ENCODE measurements at regions of chrX and their contacts with region 1.

Region 1: GRCh38 chrX:109890895-109891502 is 111.9 kb upstream of the TMEM164 start:
- DNase-seq: peak; percentile 63
- ATAC-seq: peak; percentile 69
- H3K4me3 Mint-ChIP-seq: no peak overlapping the region
- H3K27ac Mint-ChIP-seq: no peak overlapping the region
- H3K4me1 Mint-ChIP-seq: no peaks in the 10 kb centered on the region
- H3K27me3 Mint-ChIP-seq: no peaks in the 10 kb centered on the region

Region 2: GRCh38 chrX:108736509-108737479 is 1154.2 kb before region 1 on chrX and contains the start of gene IRS4:
- CTCF ChIA-PET with region 1: no interaction called
- POLR2A ChIA-PET with region 1: no interaction called
- intact Hi-C with region 1: loop called in 1 of 2 experiments (anchors 10 kb)
- DNase-seq: peak; percentile 5
- ATAC-seq: no peak
- H3K4me3 Mint-ChIP-seq: no peak within 1 kb of the TSS
- H3K27ac Mint-ChIP-seq: no peak within 1 kb of the TSS
- H3K4me1 Mint-ChIP-seq: no peaks in the 10 kb centered on the region
- H3K27me3 Mint-ChIP-seq: peaks cover 24% of the 10 kb centered on the region
- total RNA-seq, gene IRS4: not detected

Region 3: GRCh38 chrX:109485470-109486340 is 405.3 kb before region 1 on chrX:
- CTCF ChIA-PET with region 1: interaction called, 20 read pairs
- POLR2A ChIA-PET with region 1: no interaction called
- intact Hi-C with region 1: loop called (anchors 1 kb)
- DNase-seq: peak; percentile 68
- ATAC-seq: peak; percentile 36
- H3K4me3 Mint-ChIP-seq: no peak overlapping the region
- H3K27ac Mint-ChIP-seq: no peak overlapping the region
- H3K4me1 Mint-ChIP-seq: no peaks in the 10 kb centered on the region
- H3K27me3 Mint-ChIP-seq: peaks cover 2% of the 10 kb centered on the region

Region 4: DNA sequence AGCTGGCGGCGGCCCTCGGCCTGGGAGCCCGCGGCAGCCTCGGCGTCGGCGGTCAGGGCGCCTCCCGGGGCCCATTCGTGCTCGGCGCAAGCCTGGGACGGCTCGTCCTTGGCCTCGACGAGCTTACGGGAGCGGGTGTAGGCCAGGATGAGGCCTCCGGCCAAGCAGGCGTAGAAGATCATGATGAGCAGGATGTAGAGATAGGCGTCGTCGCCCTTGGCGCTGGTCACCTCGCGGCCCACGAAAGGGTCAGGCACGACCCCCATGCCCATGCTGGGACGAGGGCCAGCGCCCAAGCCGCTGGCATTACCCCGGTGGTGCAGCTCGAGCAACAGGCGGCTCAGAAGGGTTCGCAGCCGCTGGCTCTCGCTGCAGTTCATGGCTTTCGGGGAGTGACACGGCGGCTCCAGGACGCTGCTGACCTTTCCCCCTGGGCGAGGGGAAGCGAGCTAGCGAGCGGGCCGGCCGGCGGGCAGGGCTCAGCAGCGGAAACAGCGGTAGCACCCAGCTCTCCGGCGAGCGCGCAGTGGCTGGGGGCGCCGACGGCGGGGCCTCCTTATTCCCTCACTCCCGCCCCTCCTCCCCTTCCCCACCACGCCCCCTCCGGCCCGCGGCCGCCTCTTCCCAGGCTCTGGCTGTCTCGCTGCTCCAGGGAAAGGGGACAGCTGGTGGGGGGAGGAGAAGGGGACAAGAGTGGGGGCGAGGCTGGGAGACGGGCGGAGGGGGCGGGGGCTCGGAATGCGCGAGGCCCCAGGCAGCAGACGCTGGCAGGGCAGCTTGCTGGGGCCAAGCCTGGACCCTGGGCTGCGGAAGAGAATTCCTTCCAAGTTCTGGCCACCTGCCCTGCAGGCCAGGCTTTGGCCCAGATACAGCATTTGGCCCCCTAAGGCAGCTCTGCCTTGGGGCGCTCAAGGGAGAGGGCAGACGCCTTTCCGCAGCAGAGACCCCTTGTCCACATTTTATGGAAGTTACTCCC is 266.1 kb before region 1 on chrX and contains the start of gene KCNE5:
- CTCF ChIA-PET with region 1: interaction called, 3 read pairs
- POLR2A ChIA-PET with region 1: no interaction called
- intact Hi-C with region 1: loop called in 1 of 2 experiments (anchors 10 kb)
- DNase-seq: no peak
- ATAC-seq: no peak
- H3K4me3 Mint-ChIP-seq: no peak within 1 kb of the TSS
- H3K27ac Mint-ChIP-seq: no peak within 1 kb of the TSS
- H3K4me1 Mint-ChIP-seq: no peaks in the 10 kb centered on the region
- H3K27me3 Mint-ChIP-seq: no peaks in the 10 kb centered on the region
- total RNA-seq, gene KCNE5: 0.21 to 0.35 TPM

Region 5: GRCh38 chrX:109709129-109709631 is 181.8 kb before region 1 on chrX:
- CTCF ChIA-PET with region 1: interaction called, 23 read pairs
- POLR2A ChIA-PET with region 1: no interaction called
- intact Hi-C with region 1: loop called in 1 of 2 experiments (anchors 1 kb)
- DNase-seq: no peak
- ATAC-seq: peak; percentile 68
- H3K4me3 Mint-ChIP-seq: peak overlapping the region; percentile 43
- H3K27ac Mint-ChIP-seq: peak overlapping the region; percentile 84
- H3K4me1 Mint-ChIP-seq: peaks cover 72% of the 10 kb centered on the region
- H3K27me3 Mint-ChIP-seq: no peaks in the 10 kb centered on the region

Region 6: DNA sequence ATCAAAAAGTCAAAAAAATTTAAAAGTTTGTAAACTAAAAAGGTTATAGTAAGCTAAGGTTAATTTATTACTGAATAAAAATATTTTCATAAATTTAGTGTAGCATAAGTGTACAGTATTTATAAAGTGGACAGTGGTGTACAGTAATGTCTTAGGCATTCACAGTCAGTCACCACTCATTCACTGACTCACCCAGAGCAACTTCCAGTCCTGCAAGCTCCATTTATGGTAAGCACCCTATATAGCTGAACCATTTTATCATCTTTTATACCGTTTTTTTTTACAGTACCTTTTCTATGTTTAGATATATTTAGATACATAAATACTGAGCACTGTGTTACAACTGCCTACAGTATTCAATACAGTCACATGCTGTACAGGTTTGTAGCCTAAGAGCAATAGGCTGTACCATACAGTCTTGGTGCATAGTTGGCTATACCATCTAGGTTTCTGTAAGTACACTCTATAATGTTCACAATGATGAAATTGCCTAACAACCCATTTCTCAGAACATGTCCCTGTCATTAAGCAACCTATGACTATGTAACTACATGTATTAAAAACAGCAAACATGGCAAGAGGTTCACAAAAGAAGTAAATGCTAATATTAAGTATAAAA is 176.6 kb before region 1 on chrX:
- CTCF ChIA-PET with region 1: interaction called, 23 read pairs
- POLR2A ChIA-PET with region 1: no interaction called
- intact Hi-C with region 1: loop called in 1 of 2 experiments (anchors 1 kb)
- DNase-seq: no peak
- ATAC-seq: peak; percentile 54
- H3K4me3 Mint-ChIP-seq: no peak overlapping the region
- H3K27ac Mint-ChIP-seq: no peak overlapping the region
- H3K4me1 Mint-ChIP-seq: peaks cover 46% of the 10 kb centered on the region
- H3K27me3 Mint-ChIP-seq: no peaks in the 10 kb centered on the region

Measured in activated CD4-positive, alpha-beta T cell treated with anti-CD3 and anti-CD28 coated beads for 36 hours (primary cell).